Prostate gland (tissue), 2 donors: ENCODE measurements at regions of chr5 and their contacts with region 1.

Region 1: DNA sequence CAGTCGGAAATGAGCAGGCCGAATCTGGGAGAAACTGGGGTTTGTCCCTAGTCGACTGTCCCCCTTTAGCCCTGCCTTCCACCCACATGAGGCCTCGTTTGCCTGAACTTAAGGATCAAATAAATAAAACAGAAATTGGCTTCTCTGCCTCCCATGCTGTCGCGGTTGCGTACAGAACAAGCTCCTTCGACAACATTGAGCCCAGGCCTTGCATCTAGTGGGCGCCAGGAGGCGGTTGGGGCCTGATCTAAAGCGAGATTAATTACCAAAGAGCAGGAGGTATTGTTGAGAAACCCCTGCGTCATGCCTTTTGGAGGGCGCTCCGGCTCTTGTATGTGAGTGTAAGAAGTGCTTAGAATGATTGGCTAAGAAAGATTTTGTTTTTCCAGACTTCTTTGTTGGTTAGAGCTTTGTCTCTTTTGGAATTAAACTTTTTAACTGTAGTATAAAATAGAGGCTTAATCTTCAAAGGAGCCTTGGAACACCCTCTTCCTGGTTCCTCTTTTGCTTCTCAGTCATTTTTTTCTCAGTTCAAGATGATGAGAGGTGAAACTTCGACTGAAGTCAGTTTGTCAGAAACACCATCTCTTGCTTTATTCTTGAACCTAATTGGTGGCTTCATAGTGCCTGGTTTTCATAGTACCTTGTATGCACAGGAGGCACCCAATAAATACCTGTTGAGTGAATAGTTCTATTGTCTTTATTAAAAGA is 827 bp downstream of the ATP6V0E1 start:
- DNase-seq: peak; percentile 78
- H3K4me3 ChIP-seq: peak overlapping the region; percentile 64 to 95
- H3K27ac ChIP-seq: peak overlapping the region; percentile 97 to 99
- H3K4me1 ChIP-seq: no peaks in the 10 kb centered on the region
- H3K27me3 ChIP-seq: no peaks in the 10 kb centered on the region
- CTCF ChIP-seq: peak in 3 of 4 experiments; percentile 35 to 57 (median 55)
- POLR2A ChIP-seq: no peak

Region 2: GRCh38 chr5:172932313-172933017 is 51.9 kb before region 1 on chr5:
- intact Hi-C with region 1: no loop called
- DNase-seq: peak; percentile 74
- H3K4me3 ChIP-seq: no peak overlapping the region
- H3K27ac ChIP-seq: peak overlapping the region; percentile 35 to 67
- H3K4me1 ChIP-seq: no peaks in the 10 kb centered on the region
- H3K27me3 ChIP-seq: no peaks in the 10 kb centered on the region
- CTCF ChIP-seq: peak; percentile 92 to 99 (median 97)
- POLR2A ChIP-seq: no peak

Region 3: GRCh38 chr5:173057062-173057924 is 72.9 kb after region 1 on chr5:
- intact Hi-C with region 1: loop called (anchors 1 kb)
- DNase-seq: peak; percentile 99
- H3K4me3 ChIP-seq: peak overlapping the region; percentile 81 to 97
- H3K27ac ChIP-seq: peak overlapping the region; percentile 98 to 100
- H3K4me1 ChIP-seq: no peaks in the 10 kb centered on the region
- H3K27me3 ChIP-seq: no peaks in the 10 kb centered on the region
- CTCF ChIP-seq: peak in 2 of 4 experiments; percentile 34 to 36
- POLR2A ChIP-seq: no peak

Region 4: DNA sequence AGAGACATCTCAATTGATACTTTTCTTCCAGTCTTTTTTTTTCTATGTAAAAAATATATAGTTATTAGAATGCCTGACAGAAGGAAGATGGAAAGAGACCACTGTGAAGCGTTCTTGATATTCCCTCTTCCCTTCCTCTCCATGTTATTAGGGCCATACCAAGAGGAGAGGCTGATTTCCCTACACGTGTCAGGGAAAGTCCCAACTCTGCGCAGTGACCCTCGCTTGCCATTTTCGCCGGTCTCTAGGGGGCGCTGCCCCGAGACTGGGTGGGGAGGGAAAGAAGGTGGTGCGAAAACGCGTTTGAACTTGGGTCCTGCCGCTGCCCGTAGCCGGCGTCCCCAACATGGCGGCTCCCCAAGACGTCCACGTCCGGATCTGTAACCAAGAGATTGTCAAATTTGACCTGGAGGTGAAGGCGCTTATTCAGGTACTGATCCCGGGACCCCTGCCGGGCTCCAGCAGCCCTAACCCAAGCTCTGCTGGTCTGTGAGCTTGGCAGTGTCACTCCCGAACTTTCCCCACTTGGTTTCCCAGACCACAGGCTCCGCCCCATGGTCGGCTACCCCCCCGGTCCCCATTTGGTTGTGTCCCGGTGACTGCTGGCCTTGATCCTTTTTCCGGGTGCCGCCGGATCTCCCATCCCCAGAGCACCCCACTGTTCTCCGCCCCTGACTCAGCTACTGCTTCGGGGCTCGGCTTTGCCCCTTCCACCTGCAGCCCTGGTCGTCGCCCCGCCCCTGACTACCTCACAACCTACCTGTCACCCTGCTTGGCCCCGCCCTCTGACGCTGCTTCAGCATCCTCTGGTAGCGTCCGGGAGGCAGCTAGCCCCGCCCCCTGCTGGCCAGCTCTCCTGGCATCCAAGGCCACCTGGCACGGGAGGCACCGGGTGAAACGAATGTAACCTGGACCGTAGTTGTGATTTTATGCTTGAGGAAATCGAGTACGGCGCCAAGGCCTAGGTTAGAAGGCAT is 160.1 kb after region 1 on chr5 and contains the start of gene BNIP1:
- intact Hi-C with region 1: loop called (anchors 2 kb)
- DNase-seq: peak; percentile 98
- H3K4me3 ChIP-seq: peak within 1 kb of the TSS; percentile 62 to 90
- H3K27ac ChIP-seq: peak within 1 kb of the TSS; percentile 84 to 94
- H3K4me1 ChIP-seq: no peaks in the 10 kb centered on the region
- H3K27me3 ChIP-seq: no peaks in the 10 kb centered on the region
- CTCF ChIP-seq: peak; percentile 79 to 97 (median 92)
- POLR2A ChIP-seq: peak; percentile 49
- total RNA-seq, gene BNIP1: 12.5 to 19.8 TPM

Region 5: GRCh38 chr5:173283318-173284288 is 299.2 kb after region 1 on chr5:
- intact Hi-C with region 1: loop called (anchors 5 kb)
- DNase-seq: peak; percentile 65
- H3K4me3 ChIP-seq: peak overlapping the region in 1 of 2 donors; percentile 13
- H3K27ac ChIP-seq: no peak overlapping the region
- H3K4me1 ChIP-seq: no peaks in the 10 kb centered on the region
- H3K27me3 ChIP-seq: no peaks in the 10 kb centered on the region
- CTCF ChIP-seq: peak; percentile 39 to 84 (median 70)
- POLR2A ChIP-seq: no peak